Posterior vena cava (tissue), 2 donors: ENCODE measurements at regions of chr13 and their contacts with region 1.

Region 1: DNA sequence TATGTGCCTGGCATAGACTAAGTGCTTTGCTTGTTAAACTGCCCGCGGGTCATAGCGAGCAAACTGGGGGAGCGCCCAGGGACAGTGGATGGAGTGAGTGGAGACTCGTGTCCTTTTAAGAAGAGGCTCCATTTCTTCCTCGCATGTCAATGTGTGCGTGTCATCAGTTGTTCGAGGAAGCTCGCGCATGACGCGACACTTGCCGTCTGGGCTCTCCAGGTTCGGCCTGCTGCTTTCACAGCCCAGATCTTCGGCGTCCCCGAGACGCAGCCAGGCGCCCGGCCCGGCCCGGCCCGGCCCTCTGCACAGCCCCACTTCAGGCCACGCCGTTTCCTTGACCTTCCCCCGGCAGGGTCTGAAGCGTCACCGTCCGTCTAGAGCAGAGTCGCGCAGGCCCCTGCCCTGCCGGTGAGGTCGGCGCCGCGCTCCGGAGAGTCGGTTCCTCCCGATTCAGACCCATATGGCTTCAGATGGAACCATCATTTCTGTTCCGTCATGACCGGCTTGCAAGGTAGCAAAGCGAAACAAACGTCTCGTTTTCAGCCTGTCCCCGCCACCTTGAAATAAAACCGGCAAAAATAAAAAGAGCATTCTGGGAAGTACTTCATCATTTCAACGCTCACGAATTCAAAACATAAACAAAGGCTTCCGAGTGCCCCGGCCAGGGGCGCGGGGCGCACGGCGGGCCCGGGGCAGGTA is 599 bp upstream of the ARHGEF7 start:
- DNase-seq: peak; percentile 87

Region 2: DNA sequence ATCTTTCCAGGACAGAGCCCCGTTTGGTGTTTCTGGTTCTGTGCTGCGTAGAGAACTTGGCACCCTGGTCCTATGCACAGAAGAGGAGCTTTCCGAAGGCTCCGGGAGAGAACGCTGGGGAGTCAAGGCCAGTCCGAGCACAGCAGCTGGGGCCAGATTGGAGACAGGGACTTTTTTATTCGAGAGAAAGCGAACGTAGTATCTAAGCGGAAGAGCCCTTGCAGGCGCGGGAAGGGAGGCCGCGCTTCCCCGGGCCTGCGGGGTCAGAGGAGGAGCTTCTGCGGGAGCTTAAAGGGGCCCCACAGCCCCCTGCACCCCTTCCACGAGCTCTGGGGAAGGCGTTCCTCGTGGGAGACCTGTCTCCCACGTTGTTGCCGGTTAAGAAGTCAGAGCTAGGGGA is 48.0 kb before region 1 on chr13:
- intact Hi-C with region 1: loop called in 1 of 2 experiments (anchors 10 kb)
- DNase-seq: no peak